ENCODE measurements at regions of chr18 and their contacts with region 1.

Region 1: GRCh38 chr18:79528846-79529245 is 133.1 kb downstream of the NFATC1 start:
- DNase-seq: peak; percentile 74
- H3K4me3 ChIP-seq: no peak overlapping the region
- H3K27ac ChIP-seq: no peak overlapping the region
- H3K4me1 ChIP-seq: peaks cover 9% of the 10 kb centered on the region
- H3K27me3 ChIP-seq: no peaks in the 10 kb centered on the region
- CTCF ChIP-seq: peak; percentile 87

Region 2: GRCh38 chr18:78965917-78966792 is 562.7 kb before region 1 on chr18:
- CTCF ChIA-PET with region 1: no interaction called
- POLR2A ChIA-PET with region 1: no interaction called
- intact Hi-C with region 1: no loop called
- DNase-seq: no peak
- H3K4me3 ChIP-seq: no peak overlapping the region
- H3K27ac ChIP-seq: no peak overlapping the region
- H3K4me1 ChIP-seq: no peaks in the 10 kb centered on the region
- H3K27me3 ChIP-seq: peaks cover 23% of the 10 kb centered on the region
- CTCF ChIP-seq: no peak

Region 3: GRCh38 chr18:79378542-79379250 is 150.2 kb before region 1 on chr18:
- CTCF ChIA-PET with region 1: interaction called, 3 read pairs
- POLR2A ChIA-PET with region 1: no interaction called
- intact Hi-C with region 1: loop called (anchors 1 kb)
- DNase-seq: peak; percentile 80
- H3K4me3 ChIP-seq: no peak overlapping the region
- H3K27ac ChIP-seq: no peak overlapping the region
- H3K4me1 ChIP-seq: no peaks in the 10 kb centered on the region
- H3K27me3 ChIP-seq: no peaks in the 10 kb centered on the region
- CTCF ChIP-seq: peak; percentile 97

Region 4: DNA sequence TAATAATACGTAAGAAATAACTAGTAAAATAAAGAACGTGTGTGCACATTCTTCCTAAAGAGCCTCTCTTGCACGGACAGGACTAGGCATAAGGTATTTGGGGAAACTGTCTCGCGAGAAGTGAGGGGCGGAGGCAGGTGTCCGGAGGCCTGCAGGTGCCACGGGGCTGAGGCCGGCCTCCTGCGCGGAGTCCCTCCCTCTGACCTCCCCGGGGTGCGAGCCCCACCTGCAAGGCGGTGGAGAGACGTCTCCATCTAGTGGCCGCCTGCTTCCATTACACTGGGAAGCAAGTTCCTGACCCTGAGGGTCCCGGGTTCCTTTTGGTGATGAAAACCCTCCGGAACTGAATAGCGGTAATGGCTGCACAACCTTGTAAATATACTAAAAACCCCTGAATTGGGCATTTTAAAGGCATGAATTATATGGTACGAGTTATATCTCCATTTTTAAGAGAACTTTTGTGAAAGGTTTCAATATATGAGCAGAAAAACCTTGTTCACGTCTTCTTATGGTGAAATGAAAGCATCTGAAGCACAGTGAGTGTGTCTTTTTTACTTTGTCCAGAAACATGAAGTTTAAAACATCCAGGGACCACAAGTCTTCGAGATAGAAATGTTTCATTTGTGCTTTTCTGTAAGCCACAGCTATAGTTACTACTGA is 115.3 kb after region 1 on chr18:
- CTCF ChIA-PET with region 1: no interaction called
- POLR2A ChIA-PET with region 1: no interaction called
- intact Hi-C with region 1: loop called (anchors 5 kb)
- DNase-seq: peak; percentile 61
- H3K4me3 ChIP-seq: no peak overlapping the region
- H3K27ac ChIP-seq: no peak overlapping the region
- H3K4me1 ChIP-seq: peaks cover 15% of the 10 kb centered on the region
- H3K27me3 ChIP-seq: no peaks in the 10 kb centered on the region
- CTCF ChIP-seq: peak; percentile 95

Measured in A673 (cell line).